ENCODE measurements at regions of chr7 and their contacts with region 1.

Region 1: GRCh38 chr7:27160546-27161213 is 4.2 kb upstream of the HOXA7 start:
- DNase-seq: peak; percentile 97
- H3K4me3 ChIP-seq: peak overlapping the region; percentile 54 to 59 (median 56)
- H3K27ac ChIP-seq: no peak overlapping the region
- H3K4me1 ChIP-seq: peaks cover 25 to 69% (median 50%) of the 10 kb centered on the region in 4 donors
- H3K27me3 ChIP-seq: peaks cover 20 to 100% (median 91%) of the 10 kb centered on the region in 4 donors
- CTCF ChIP-seq: peak; percentile 97 to 100 (median 99)
- EP300 ChIP-seq: no peak
- POLR2A ChIP-seq: no peak

Region 2: DNA sequence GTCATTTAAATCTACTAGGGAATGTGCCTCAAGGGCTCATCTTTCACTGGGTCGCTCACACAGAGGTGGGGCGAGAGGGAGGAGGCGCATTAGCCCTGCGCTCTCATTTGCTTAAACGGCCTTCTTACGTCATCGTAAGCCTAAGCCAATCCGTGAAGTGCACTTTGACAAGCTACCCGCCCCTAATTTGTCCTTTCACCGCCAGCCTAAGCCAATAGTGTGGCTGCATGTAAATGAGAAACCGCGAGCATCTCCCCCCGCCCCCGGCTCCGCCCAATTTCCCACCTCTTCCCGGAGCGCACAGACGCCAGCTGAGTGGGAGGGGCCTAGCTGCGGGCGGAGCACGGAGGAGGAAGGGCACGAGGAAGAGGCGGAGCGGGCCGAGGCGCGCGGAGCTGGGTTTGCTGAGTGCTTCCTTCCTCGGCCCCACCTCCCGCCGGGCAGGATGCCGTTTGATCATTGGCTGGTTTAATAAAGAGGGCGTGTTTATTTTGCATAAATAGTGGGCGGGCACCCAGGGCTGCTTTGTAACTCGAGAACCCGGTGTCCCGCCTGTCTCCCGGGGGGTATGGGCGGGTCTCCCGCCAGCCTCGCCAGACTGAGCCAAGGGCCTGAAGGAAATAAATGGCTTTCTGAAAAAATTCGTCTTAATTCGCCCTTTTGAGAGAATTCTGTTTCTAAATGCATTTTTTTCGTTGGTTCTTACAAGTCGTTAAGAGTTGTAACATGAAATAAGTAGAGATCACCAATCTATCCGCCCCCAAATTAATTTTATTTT is 1298.2 kb before region 1 on chr7:
- intact Hi-C with region 1: loop called (anchors 5 kb)
- DNase-seq: no peak
- H3K4me3 ChIP-seq: peak overlapping the region in 1 of 4 donors; percentile 5
- H3K27ac ChIP-seq: no peak overlapping the region
- H3K4me1 ChIP-seq: peaks cover 3 to 15% (median 13%) of the 10 kb centered on the region in 4 donors
- H3K27me3 ChIP-seq: peaks cover 4 to 100% (median 96%) of the 10 kb centered on the region in 4 donors
- CTCF ChIP-seq: no peak
- EP300 ChIP-seq: no peak
- POLR2A ChIP-seq: no peak

Region 3: DNA sequence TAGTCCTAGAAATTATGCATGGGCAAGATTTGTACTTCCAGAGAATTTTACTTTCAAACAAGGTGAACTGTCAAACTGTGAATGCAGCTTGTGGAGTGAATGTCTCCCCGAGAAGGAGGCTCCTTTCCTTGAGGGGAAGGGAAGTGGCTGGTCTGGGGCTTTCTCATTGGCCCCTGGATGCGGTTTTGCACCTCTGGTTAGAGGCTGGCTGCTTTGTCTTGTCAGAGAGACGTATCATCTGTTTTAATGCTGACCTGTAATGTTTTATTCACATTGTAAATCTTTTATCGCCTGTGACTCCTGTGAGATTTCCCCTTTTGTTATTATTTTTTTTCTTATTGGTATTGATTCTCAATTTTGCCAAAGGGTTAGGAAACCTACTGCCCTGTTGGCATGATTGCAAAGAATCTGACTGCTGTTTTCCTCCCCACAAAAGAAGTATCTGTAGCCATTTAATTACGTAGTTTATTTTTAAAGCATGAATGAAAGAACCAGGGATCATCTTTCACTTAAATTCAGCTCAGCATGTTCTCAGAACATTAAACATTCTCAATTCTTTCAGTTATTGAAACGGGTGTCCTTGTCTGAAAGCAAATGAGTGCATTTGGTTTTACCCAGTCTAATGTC is 1247.0 kb before region 1 on chr7:
- intact Hi-C with region 1: no loop called
- DNase-seq: no peak
- H3K4me3 ChIP-seq: no peak overlapping the region
- H3K27ac ChIP-seq: no peak overlapping the region
- H3K4me1 ChIP-seq: no peaks in the 10 kb centered on the region
- H3K27me3 ChIP-seq: peaks cover 0 to 23% (median 0%) of the 10 kb centered on the region in 4 donors
- CTCF ChIP-seq: no peak
- EP300 ChIP-seq: no peak
- POLR2A ChIP-seq: no peak

Region 4: DNA sequence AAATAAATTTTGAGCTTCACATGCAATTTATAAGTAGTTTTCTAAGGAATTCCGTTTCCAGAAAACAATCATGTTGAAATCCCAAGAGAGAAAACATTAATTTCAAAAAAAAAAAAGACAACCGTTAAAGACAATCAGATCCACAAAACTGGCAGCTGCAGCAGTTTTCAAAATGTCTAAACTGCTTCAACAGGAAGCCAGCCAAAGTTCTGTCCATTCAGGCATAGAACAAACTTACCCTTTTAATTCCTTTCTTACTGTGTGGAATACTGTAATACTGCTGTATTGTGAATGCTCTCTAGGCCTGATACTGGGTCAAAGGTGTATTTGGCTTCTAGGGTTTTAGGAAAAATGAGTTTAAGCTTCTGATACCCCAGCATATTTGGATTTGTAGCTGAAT is 96.5 kb before region 1 on chr7:
- intact Hi-C with region 1: no loop called
- DNase-seq: no peak
- H3K4me3 ChIP-seq: no peak overlapping the region
- H3K27ac ChIP-seq: no peak overlapping the region
- H3K4me1 ChIP-seq: peaks cover 0 to 13% (median 6%) of the 10 kb centered on the region in 4 donors
- H3K27me3 ChIP-seq: no peaks in the 10 kb centered on the region
- CTCF ChIP-seq: no peak
- EP300 ChIP-seq: no peak
- POLR2A ChIP-seq: no peak

Measured in esophagus muscularis mucosa (tissue), 4 donors.